Colonic mucosa (tissue), 4 donors: ENCODE measurements at regions of chr2 and their contacts with region 1.

Region 1: GRCh38 chr2:96801005-96801785 is 14.9 kb upstream of the CNNM3 start:
- DNase-seq: peak; percentile 80
- H3K4me3 ChIP-seq: no peak overlapping the region
- H3K27ac ChIP-seq: no peak overlapping the region
- H3K4me1 ChIP-seq: no peaks in the 10 kb centered on the region
- H3K27me3 ChIP-seq: no peaks in the 10 kb centered on the region
- CTCF ChIP-seq: peak; percentile 89

Region 2: GRCh38 chr2:96618604-96619283 is 182.5 kb before region 1 on chr2:
- intact Hi-C with region 1: loop called (anchors 10 kb)
- DNase-seq: no peak
- H3K4me3 ChIP-seq: no peak overlapping the region
- H3K27ac ChIP-seq: no peak overlapping the region
- H3K4me1 ChIP-seq: no peaks in the 10 kb centered on the region
- H3K27me3 ChIP-seq: no peaks in the 10 kb centered on the region
- CTCF ChIP-seq: no peak

Region 3: GRCh38 chr2:96760036-96760985 is 40.9 kb before region 1 on chr2 and contains the start of gene CNNM4:
- intact Hi-C with region 1: loop called (anchors 5 kb)
- DNase-seq: peak; percentile 97
- H3K4me3 ChIP-seq: peak within 1 kb of the TSS; percentile 74
- H3K27ac ChIP-seq: peak within 1 kb of the TSS; percentile 80
- H3K4me1 ChIP-seq: peaks cover 8% of the 10 kb centered on the region
- H3K27me3 ChIP-seq: no peaks in the 10 kb centered on the region
- CTCF ChIP-seq: no peak
- total RNA-seq, gene CNNM4: 80.4 to 190 TPM